HEK293 (cell line): ENCODE measurements at regions of chr21 and their contacts with region 1.

Region 1: GRCh38 chr21:46153247-46154150 is 1.9 kb downstream of the FTCD start:
- H3K4me3 ChIP-seq: no peak overlapping the region
- H3K27ac ChIP-seq: no peak overlapping the region
- H3K4me1 ChIP-seq: no peaks in the 10 kb centered on the region
- CTCF ChIP-seq: peak; percentile 80

Region 2: DNA sequence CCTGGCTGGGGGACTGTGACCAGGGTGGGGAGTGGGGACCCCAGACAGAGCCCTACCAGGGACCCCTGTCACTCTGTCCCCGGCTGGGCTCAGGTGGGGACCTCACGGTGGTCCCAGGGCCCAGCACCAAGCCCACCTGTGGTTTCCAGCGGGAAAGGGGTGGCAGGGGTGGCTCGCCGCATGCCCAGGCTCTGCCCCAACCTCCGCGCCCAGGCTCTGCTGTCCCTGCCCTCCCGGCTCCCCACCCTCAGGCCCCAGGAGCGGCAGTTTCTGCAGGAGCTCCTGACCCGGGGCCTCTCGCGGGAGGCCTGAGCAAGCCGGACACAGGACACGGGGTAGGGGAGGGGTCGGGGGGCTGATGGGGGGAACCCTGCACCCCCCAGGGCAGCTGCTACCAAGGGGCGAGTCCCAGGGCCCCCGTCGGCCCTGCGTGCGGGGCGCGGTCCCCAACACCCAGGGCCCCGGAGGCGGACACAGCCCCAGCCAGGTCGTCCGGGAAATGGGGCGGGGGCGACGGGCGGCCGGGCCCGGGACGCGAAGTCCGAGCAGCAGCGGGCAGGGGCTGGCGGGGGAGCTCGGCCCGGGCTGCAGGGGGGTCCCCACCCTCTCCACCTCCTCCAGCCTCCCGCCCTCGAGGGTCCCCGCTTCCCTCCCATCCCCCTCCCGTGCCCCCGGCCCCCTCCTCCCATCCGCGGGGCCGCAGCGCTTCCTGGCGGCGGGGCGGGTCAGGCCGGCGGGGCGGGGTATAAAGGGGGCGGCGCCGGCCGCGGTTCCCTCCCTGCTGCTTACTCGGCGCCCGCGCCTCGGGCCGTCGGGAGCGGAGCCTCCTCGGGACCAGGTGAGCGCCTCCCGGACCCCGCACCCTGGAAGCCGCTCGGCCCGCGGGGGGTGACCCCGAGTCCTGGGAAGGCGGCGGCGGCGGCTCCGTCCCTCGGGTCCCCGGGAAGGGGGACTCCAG is 55.9 kb before region 1 on chr21 and contains the start of gene COL6A2:
- CTCF ChIA-PET with region 1: no interaction called
- POLR2A ChIA-PET with region 1: no interaction called
- H3K4me3 ChIP-seq: peak within 1 kb of the TSS; percentile 35
- H3K27ac ChIP-seq: no peak within 1 kb of the TSS; the same call in 1 of the 2 replicates
- H3K4me1 ChIP-seq: no peaks in the 10 kb centered on the region
- CTCF ChIP-seq: no peak

Region 3: DNA sequence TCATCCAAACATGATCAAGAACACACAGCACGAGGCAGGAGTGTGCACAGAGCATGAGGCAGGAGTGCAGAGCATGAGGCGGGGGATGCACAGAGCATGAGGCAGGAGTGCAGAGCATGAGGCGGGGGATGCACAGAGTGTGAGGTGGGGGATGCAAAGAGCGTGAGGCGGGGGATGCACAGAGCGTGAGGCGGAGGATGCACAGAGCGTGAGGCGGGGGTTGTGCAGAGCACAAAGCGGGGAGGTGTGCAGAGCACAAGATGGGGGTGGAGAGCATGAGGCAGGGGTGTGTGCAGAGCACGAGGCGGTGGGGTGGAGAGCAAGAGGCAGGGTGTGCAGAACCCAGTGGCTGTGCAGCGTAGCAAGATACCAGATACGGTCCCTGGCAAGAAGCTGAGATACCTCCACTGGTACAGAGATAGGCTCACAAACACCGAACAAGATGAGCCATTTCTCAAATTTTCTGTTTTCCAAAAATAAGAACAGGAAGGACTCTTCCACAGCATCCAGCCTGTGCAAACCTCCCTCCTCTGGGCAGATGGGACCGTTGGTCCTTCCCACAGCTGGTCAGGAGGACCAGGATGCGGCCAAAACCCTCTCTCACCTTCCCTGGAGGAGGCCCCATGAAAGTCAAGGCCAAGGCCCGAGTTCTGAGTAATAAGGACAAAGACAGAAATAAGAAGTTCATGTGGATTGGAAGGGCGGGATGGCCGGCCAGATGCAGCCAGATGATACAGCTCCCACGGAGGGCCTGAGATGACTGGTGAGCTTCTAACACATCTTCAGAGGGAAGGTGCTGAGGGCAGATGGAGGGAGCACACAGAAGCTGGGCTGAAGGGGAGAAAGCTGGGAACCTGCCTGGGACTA is 18.7 kb after region 1 on chr21:
- CTCF ChIA-PET with region 1: interaction called, 13 read pairs
- POLR2A ChIA-PET with region 1: no interaction called
- H3K4me3 ChIP-seq: no peak overlapping the region
- H3K27ac ChIP-seq: no peak overlapping the region
- H3K4me1 ChIP-seq: no peaks in the 10 kb centered on the region
- CTCF ChIP-seq: no peak

Region 4: GRCh38 chr21:46245213-46245915 is 91.9 kb after region 1 on chr21:
- CTCF ChIA-PET with region 1: interaction called, 11 read pairs
- POLR2A ChIA-PET with region 1: no interaction called
- H3K4me3 ChIP-seq: no peak overlapping the region
- H3K27ac ChIP-seq: no peak overlapping the region
- H3K4me1 ChIP-seq: no peaks in the 10 kb centered on the region
- CTCF ChIP-seq: no peak

Region 5: GRCh38 chr21:46307625-46308024 is 154.1 kb after region 1 on chr21:
- CTCF ChIA-PET with region 1: no interaction called
- POLR2A ChIA-PET with region 1: no interaction called
- H3K4me3 ChIP-seq: no peak overlapping the region
- H3K27ac ChIP-seq: no peak overlapping the region
- H3K4me1 ChIP-seq: no peaks in the 10 kb centered on the region
- CTCF ChIP-seq: no peak